AG04450 (cell line): ENCODE measurements at regions of chr13 and their contacts with region 1.

Region 1: DNA sequence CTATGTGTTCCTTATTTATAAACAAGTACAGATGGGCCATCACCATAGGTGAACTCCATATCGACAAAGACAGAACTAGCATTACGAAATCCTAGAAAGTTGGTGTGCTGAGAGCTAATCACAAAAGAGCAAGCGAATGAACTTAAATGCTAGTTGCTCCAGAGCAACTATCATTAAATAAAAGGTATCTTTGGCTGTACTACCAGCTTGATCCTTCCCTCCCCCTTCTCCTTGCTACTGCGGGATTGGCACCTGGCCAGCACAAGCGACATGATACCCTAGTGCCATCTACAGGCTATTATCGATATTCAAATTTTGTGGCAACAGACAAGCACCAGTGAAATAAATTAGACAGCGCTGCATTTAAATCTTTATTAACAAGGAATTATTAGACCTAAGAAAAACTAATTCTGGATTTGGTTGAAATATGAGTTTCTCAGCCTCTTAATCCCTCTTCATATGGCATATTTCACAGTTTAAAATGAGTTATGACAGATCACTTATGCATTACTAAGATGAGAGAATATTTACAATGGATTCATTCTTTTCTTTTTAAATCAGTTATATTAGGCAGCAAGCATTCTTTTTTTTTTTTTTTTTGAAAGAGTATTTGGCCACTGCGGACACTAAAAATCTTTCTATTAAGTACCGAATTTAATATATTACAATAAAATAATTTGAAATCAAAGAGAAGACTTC is 5.8 kb downstream of the PCDH9 start:
- DNase-seq: peak; percentile 68
- H3K4me3 ChIP-seq: peak overlapping the region; percentile 27; the same call in 1 of the 2 replicates
- H3K27ac ChIP-seq: no peak overlapping the region
- H3K27me3 ChIP-seq: no peaks in the 10 kb centered on the region
- CTCF ChIP-seq: peak; percentile 72

Region 2: GRCh38 chr13:66689628-66690027 is 534.7 kb before region 1 on chr13:
- CTCF ChIA-PET with region 1: interaction called, 13 read pairs
- POLR2A ChIA-PET with region 1: no interaction called
- DNase-seq: no peak
- H3K4me3 ChIP-seq: no peak overlapping the region
- H3K27ac ChIP-seq: no peak overlapping the region
- H3K27me3 ChIP-seq: no peaks in the 10 kb centered on the region
- CTCF ChIP-seq: peak; percentile 47

Region 3: GRCh38 chr13:67278235-67278634 is 53.9 kb after region 1 on chr13:
- CTCF ChIA-PET with region 1: interaction called, 12 read pairs
- POLR2A ChIA-PET with region 1: no interaction called
- DNase-seq: peak; percentile 43
- H3K4me3 ChIP-seq: no peak overlapping the region
- H3K27ac ChIP-seq: no peak overlapping the region
- H3K27me3 ChIP-seq: no peaks in the 10 kb centered on the region
- CTCF ChIP-seq: no peak

Region 4: DNA sequence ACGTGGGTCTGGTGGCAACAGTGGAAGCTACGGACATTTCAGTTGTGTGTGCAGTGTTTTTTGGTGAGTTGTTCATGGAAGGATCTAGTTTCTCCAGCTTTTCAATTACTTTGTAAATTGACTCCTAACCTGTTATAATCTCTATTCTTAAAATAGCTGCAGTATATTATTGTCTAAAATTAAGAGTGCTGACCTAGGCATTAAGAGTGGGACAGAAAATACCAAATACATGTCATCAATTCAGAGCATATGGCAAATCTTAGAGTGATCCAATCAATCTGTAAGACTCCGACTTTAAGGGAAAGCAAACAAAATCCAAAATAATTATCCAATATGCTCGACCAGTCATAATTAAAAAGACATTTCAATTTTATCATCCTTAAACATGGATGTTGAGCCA is 343.9 kb after region 1 on chr13:
- CTCF ChIA-PET with region 1: no interaction called
- POLR2A ChIA-PET with region 1: no interaction called
- DNase-seq: no peak
- H3K4me3 ChIP-seq: no peak overlapping the region
- H3K27ac ChIP-seq: no peak overlapping the region
- H3K27me3 ChIP-seq: no peaks in the 10 kb centered on the region
- CTCF ChIP-seq: no peak